ENCODE measurements at regions of chr2 and their contacts with region 1.

Region 1: GRCh38 chr2:1742681-1743395 is 1.5 kb downstream of the PXDN start:
- DNase-seq: peak; percentile 89
- H3K4me3 ChIP-seq: peak overlapping the region; percentile 78
- CTCF ChIP-seq: peak; percentile 71

Region 2: GRCh38 chr2:746697-747096 is 996.1 kb before region 1 on chr2:
- in situ Hi-C with region 1: no loop called
- DNase-seq: no peak
- H3K4me3 ChIP-seq: no peak overlapping the region
- CTCF ChIP-seq: no peak

Region 3: DNA sequence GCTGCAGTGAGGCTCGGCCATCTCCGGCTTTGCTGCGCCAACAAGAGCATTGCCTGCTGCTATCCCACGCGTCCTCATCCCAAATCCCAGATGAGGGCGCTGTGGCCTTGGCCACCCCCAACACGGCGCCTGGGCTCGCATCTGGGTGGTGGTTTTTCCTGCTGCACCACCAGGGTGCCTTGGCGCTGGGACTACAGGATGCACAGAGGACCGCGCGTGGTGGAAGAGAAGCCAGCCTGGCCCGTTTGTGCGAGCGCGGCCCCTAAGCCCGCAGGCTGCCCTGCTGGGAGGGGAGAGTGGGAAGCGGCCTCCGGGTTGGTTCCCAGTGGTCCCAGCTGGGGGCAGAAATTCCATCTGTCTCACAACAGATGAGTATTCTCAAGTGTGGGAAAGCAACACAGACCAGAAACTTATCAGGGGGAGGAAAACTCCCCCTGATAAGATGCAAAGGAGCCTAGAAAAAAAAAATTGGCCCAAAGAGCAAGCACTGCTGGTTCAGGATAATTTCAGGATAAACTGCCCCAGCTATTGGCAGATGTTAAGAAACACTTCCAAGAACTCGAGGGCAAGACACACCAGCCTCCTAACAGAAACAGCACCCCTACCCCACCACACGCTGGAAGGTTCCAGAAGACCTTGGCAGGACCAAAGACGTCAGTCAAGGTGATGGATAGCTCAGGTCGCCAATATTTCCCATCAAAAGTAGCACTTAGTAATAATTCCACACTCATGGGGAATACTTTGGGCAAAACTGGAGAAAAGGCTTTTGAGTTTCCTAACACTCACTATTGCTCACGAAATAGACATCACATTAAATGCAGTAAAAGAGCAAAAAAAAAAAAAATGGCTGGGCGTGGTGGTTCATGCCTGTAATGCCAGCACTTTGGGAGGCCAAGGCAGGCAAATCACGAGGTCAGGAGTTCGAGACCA is 150.6 kb before region 1 on chr2:
- in situ Hi-C with region 1: loop called (anchors 5 kb)
- DNase-seq: peak; percentile 90
- H3K4me3 ChIP-seq: no peak overlapping the region
- CTCF ChIP-seq: peak; percentile 66

Measured in astrocyte of the cerebellum (primary cell).